Activated CD8-positive, alpha-beta T cell treated with anti-CD3 and anti-CD28 coated beads for 36 hours (primary cell): ENCODE measurements at regions of chr2 and their contacts with region 1.

Region 1: GRCh38 chr2:88627056-88627855 is at the start of gene EIF2AK3:
- DNase-seq: peak; percentile 97
- ATAC-seq: peak; percentile 88
- H3K4me3 Mint-ChIP-seq: peak within 1 kb of the TSS; percentile 92
- H3K27ac Mint-ChIP-seq: peak within 1 kb of the TSS; percentile 94
- H3K4me1 Mint-ChIP-seq: peaks cover 6% of the 10 kb centered on the region
- H3K27me3 Mint-ChIP-seq: no peaks in the 10 kb centered on the region
- CTCF ChIP-seq: no peak
- total RNA-seq, gene EIF2AK3: 14.9 to 17.4 TPM

Region 2: GRCh38 chr2:88503771-88504170 is 123.5 kb before region 1 on chr2:
- CTCF ChIA-PET with region 1: no interaction called
- POLR2A ChIA-PET with region 1: no interaction called
- intact Hi-C with region 1: no loop called
- DNase-seq: no peak
- ATAC-seq: no peak
- H3K4me3 Mint-ChIP-seq: no peak overlapping the region
- H3K27ac Mint-ChIP-seq: no peak overlapping the region
- H3K4me1 Mint-ChIP-seq: no peaks in the 10 kb centered on the region
- H3K27me3 Mint-ChIP-seq: peaks cover 3% of the 10 kb centered on the region
- CTCF ChIP-seq: no peak

Region 3: DNA sequence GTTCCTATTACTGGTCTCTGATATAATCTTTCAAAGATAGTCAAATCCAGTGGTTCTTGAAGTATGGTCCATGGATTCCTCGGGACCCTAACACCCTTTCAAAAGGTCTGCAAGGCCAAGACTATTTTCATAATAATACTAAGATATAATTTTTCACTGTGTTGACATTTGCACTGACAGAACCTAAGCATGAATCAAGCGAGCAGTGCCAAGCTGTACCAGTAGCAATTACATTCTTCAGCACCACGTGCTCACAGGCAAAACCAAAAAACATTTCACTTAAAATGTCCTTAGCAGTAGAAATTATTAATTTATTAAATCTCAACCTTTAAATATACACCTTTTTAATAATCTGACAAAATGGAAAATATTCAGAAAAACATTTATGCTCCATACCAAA is 59.1 kb before region 1 on chr2:
- CTCF ChIA-PET with region 1: no interaction called
- POLR2A ChIA-PET with region 1: no interaction called
- intact Hi-C with region 1: no loop called
- DNase-seq: no peak
- ATAC-seq: no peak
- H3K4me3 Mint-ChIP-seq: no peak overlapping the region
- H3K27ac Mint-ChIP-seq: no peak overlapping the region
- H3K4me1 Mint-ChIP-seq: no peaks in the 10 kb centered on the region
- H3K27me3 Mint-ChIP-seq: no peaks in the 10 kb centered on the region
- CTCF ChIP-seq: no peak

Region 4: DNA sequence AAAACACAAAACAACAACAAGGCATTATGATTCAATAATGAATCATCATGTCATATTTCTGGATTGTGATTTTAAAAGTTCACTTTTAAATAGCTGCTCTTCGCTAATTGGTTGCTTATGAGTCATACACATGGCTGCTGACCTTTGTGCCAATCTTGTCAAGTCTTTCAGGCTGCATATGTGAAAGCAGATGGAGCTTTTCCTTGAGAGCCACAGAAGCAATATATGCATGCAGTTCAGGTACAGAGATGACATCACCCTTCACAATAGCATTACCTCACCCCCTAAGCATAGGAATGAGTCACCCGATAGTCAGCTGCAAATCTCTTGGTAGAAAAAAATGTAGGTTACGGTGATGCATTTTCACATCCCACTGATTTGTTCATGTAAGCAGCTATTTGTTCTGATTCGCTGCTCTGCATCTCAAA is 27.2 kb before region 1 on chr2:
- CTCF ChIA-PET with region 1: no interaction called
- POLR2A ChIA-PET with region 1: interaction called, 11 read pairs
- intact Hi-C with region 1: no loop called
- DNase-seq: peak; percentile 73
- ATAC-seq: peak; percentile 99
- H3K4me3 Mint-ChIP-seq: no peak overlapping the region
- H3K27ac Mint-ChIP-seq: peak overlapping the region; percentile 34
- H3K4me1 Mint-ChIP-seq: peaks cover 42% of the 10 kb centered on the region
- H3K27me3 Mint-ChIP-seq: no peaks in the 10 kb centered on the region
- CTCF ChIP-seq: no peak

Region 5: DNA sequence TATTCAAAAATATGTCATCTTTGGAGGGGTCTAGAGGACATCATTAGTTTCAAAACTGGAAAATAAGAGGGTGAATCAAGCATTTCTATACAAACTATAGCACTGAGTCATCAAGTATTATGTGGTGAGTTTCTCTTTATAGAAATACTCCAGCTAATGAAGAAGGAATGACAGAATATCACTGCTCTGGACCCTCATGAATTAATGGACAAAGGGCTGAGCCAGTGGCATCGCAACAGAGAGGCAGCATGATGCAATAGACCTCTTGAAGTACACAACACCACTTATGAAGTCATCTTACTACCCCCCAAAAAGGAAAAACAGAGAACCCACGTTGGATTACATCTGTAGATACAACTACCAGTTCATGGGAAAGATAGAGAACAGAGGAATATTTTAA is 27.5 kb after region 1 on chr2:
- CTCF ChIA-PET with region 1: no interaction called
- POLR2A ChIA-PET with region 1: no interaction called
- intact Hi-C with region 1: no loop called
- DNase-seq: no peak
- ATAC-seq: no peak
- H3K4me3 Mint-ChIP-seq: no peak overlapping the region
- H3K27ac Mint-ChIP-seq: no peak overlapping the region
- H3K4me1 Mint-ChIP-seq: no peaks in the 10 kb centered on the region
- H3K27me3 Mint-ChIP-seq: no peaks in the 10 kb centered on the region
- CTCF ChIP-seq: no peak

Region 6: GRCh38 chr2:88691339-88692183 is 64.3 kb after region 1 on chr2 and contains the start of gene RPIA:
- CTCF ChIA-PET with region 1: interaction called, 4 read pairs
- POLR2A ChIA-PET with region 1: interaction called, 14 read pairs
- intact Hi-C with region 1: no loop called
- DNase-seq: peak; percentile 100
- ATAC-seq: peak; percentile 96
- H3K4me3 Mint-ChIP-seq: peak within 1 kb of the TSS; percentile 94
- H3K27ac Mint-ChIP-seq: peak within 1 kb of the TSS; percentile 96
- H3K4me1 Mint-ChIP-seq: peaks cover 51% of the 10 kb centered on the region
- H3K27me3 Mint-ChIP-seq: no peaks in the 10 kb centered on the region
- CTCF ChIP-seq: peak; percentile 63
- total RNA-seq, gene RPIA: 79.4 to 81.0 TPM

Region 7: DNA sequence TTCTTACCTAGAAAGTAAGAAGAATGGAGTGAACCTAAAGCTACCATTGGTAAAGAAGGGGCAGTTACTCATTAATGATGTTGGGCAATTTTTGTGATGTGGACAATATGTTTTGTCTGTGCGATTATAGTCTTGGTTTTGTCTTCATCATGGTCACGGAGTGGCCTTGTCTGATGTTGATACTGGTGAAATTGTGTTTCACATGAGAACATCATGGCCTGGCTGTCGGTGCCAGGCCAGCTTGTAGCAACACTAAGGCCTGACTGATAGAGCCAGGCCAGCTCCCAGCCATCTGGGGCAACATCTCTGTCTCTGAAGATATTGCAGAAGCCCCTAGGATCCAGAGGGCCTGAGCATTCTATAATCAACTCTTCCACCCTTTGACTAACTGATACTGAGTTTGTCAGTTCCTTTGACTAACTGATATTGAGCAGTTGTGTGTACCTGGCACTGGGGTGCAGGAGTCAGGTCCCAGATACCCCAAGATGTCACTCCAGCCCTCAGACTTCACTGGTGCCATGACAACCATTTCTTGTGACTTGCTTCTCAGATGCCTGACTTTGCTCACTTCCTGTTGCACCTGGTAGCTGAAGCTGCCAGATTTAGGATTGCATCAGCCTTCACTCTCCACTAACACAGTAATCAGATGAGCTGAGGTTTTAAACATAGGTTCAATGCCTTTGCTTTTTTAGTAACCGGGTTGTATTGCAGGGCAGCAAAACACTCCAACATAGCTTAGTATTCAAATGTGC is 126.8 kb after region 1 on chr2:
- CTCF ChIA-PET with region 1: no interaction called
- POLR2A ChIA-PET with region 1: no interaction called
- intact Hi-C with region 1: no loop called
- DNase-seq: peak; percentile 57
- ATAC-seq: peak; percentile 92
- H3K4me3 Mint-ChIP-seq: no peak overlapping the region
- H3K27ac Mint-ChIP-seq: peak overlapping the region; percentile 94
- H3K4me1 Mint-ChIP-seq: peaks cover 46% of the 10 kb centered on the region
- H3K27me3 Mint-ChIP-seq: no peaks in the 10 kb centered on the region
- CTCF ChIP-seq: no peak